ENCODE measurements at regions of chr16 and their contacts with region 1.

Region 1: DNA sequence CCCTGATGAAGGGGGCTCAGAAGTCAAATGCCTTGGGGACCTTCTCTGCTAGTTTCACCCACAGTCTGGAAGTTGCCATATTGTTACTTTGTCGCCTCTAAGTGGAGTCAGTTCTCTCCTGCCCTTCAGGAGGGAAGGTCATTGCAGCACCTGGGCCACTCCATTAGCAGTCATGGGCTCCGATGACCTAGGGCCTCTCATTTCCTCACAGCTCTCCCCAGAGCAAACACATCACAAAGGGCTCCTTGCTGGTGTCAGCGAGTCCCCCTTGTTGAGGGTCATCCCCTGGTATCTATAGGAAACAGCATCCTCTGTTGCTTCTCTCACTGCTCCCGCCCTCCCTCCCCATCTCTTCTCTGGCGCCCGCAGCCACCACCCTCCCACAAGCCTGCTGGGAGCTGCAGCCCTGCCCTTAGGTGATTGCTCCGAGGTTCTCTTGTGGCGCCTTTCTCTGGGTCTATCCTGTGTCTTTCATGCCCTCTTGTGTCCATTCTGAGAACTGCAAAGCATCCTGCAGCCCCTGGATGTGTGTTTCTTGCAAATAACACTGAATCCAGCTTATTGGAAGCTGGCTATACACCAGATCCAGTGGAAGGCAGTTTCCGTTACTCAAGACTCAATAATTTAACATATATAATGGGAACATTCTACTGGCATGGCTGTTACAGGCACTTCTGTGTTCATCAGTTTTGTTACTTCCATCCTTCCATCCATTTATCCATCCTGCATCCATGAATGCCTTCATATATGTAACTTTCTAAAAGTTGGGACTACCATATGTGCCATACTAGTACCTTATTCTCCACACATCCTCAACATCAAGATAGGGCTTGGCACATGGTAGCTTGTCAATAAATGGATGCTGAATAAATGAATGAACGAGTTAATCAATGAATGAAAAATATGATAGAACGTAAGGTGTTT is 21.2 kb downstream of the PDILT start:
- DNase-seq: peak; percentile 67 to 82
- H3K4me3 ChIP-seq: no peak overlapping the region
- H3K27ac ChIP-seq: no peak overlapping the region
- H3K4me1 ChIP-seq: peaks cover 0 to 5% (median 2%) of the 10 kb centered on the region in 4 experiments; a peak in 4 of 7 replicates
- H3K27me3 ChIP-seq: no peaks in the 10 kb centered on the region
- CTCF ChIP-seq: peak; percentile 50 to 94 (median 88)
- EP300 ChIP-seq: no peak
- POLR2A ChIP-seq: no peak
- RAD21 ChIP-seq: peak; percentile 92 to 97

Region 2: DNA sequence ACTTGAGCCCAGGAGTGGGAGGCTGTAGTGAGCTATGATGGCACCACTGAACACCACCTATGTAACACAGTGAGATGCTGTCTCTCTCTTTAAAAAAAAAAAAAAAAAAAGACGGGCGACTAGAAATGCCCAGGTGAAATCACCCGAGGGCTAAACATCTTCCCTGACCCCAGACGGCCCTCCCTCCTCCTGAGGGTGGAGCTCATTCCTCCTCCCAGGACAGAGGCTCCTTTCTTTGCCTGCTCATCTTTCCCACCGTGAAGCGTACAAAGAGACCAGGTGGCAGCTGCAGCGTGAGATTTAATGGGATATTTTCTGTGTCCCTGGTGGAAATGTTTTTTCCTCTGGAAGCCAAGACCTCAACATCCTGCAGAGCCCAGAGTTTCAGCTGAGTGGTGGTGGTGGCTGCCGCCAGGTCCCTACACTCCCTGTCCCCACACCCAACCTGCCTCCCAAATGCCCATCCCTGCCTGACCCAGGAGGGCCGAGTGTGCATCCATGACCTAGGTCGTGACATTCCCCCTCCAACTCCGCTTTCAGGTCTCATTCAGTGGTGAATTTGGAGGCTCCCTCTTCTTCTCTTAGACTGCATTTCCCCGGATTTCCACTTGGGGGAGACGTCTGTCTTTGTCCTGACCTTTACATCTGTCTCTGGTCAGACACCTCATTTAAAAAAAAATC is 484.3 kb before region 1 on chr16:
- CTCF ChIA-PET with region 1: interaction called, 57 read pairs
- POLR2A ChIA-PET with region 1: interaction called, 3 read pairs
- DNase-seq: peak in 1 of 2 experiments; percentile 86
- H3K4me3 ChIP-seq: no peak overlapping the region
- H3K27ac ChIP-seq: no peak overlapping the region; the same call in 1 of the 2 replicates
- H3K4me1 ChIP-seq: peaks cover 0 to 7% (median 4%) of the 10 kb centered on the region in 4 experiments; a peak in 5 of 7 replicates
- H3K27me3 ChIP-seq: no peaks in the 10 kb centered on the region
- CTCF ChIP-seq: peak; percentile 27 to 86 (median 73)
- EP300 ChIP-seq: no peak
- POLR2A ChIP-seq: no peak
- RAD21 ChIP-seq: peak; percentile 94 to 95

Region 3: GRCh38 chr16:20253825-20254224 is 129.5 kb before region 1 on chr16:
- CTCF ChIA-PET with region 1: no interaction called
- POLR2A ChIA-PET with region 1: no interaction called
- DNase-seq: no peak
- H3K4me3 ChIP-seq: no peak overlapping the region
- H3K27ac ChIP-seq: no peak overlapping the region
- H3K4me1 ChIP-seq: peaks cover 0 to 7% (median 1%) of the 10 kb centered on the region in 4 experiments; a peak in 2 of 7 replicates
- H3K27me3 ChIP-seq: no peaks in the 10 kb centered on the region
- CTCF ChIP-seq: no peak
- EP300 ChIP-seq: no peak
- POLR2A ChIP-seq: no peak
- RAD21 ChIP-seq: no peak

Region 4: DNA sequence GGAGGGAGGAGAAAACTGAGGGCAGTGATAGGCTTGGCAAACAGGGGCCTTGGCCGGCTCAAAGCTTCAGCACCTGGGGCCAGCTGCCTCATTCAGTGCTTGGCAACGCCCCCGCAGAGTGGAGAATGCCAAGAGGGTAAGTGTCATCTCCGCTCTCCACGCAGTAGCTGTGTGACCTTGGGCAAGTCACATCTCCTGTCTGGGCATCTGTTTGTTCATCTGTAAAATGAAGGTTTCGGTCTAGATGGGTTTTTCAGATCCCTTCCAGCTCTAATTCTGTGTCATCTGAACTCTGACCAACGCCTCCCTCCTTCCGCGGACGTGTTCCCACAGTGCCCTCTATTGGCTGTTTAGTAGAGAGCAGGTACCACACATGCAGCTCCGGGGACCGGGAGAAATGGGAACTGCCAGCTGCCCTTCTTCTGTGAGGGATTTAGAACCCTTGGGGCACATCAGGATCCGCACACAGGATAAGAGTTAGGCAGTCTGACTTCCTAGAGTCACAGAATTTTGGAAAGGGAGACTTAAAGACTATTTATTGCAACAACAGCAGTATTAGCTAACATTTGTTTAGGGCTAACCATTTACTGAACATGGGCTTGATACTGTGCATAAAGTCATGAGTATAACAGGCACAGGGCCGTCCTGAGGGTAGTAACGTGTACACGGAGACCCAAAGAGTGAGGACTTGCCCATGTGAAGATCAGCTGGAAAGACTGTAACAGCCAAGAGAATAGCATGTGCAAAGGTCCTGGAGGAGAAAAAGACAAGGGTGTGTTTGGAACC is 82.9 kb before region 1 on chr16:
- CTCF ChIA-PET with region 1: interaction called, 26 read pairs
- POLR2A ChIA-PET with region 1: no interaction called
- DNase-seq: peak; percentile 47 to 72
- H3K4me3 ChIP-seq: no peak overlapping the region
- H3K27ac ChIP-seq: no peak overlapping the region
- H3K4me1 ChIP-seq: no peaks in the 10 kb centered on the region; a peak in 1 of 7 replicates
- H3K27me3 ChIP-seq: no peaks in the 10 kb centered on the region
- CTCF ChIP-seq: peak; percentile 74 to 90 (median 88)
- EP300 ChIP-seq: no peak
- POLR2A ChIP-seq: no peak
- RAD21 ChIP-seq: peak; percentile 97 to 99

Region 5: GRCh38 chr16:20348365-20349185 is 34.8 kb before region 1 on chr16:
- CTCF ChIA-PET with region 1: interaction called, 36 read pairs
- POLR2A ChIA-PET with region 1: no interaction called
- DNase-seq: peak; percentile 39 to 93
- H3K4me3 ChIP-seq: no peak overlapping the region
- H3K27ac ChIP-seq: no peak overlapping the region
- H3K4me1 ChIP-seq: peaks cover 0 to 6% (median 1%) of the 10 kb centered on the region in 4 experiments; a peak in 3 of 7 replicates
- H3K27me3 ChIP-seq: no peaks in the 10 kb centered on the region
- CTCF ChIP-seq: peak; percentile 72 to 92 (median 83)
- EP300 ChIP-seq: no peak
- POLR2A ChIP-seq: no peak
- RAD21 ChIP-seq: peak; percentile 54 to 64

Region 6: DNA sequence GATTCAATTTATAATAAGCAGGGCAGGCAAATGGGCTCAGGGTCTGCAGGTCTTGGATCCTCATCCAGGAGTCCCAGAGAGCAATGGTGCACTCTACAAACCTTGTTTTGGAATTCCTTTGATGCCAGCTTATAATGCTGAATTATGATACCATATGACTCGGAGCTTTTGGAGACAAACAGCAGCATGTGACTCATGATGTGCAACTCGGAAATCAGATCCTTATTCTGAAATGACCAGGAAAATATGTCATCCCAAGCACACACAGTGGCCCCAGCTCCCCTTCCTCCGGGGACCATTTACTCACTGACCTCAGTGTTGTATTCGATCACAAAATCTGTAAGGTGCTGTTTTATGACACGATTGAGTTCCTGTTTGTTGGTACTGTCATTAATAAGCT is 10.7 kb before region 1 on chr16:
- CTCF ChIA-PET with region 1: interaction called, 20 read pairs
- POLR2A ChIA-PET with region 1: no interaction called
- DNase-seq: no peak
- H3K4me3 ChIP-seq: no peak overlapping the region
- H3K27ac ChIP-seq: no peak overlapping the region
- H3K4me1 ChIP-seq: no peaks in the 10 kb centered on the region
- H3K27me3 ChIP-seq: no peaks in the 10 kb centered on the region; a peak in 1 of 7 replicates
- CTCF ChIP-seq: no peak
- EP300 ChIP-seq: no peak
- POLR2A ChIP-seq: no peak
- RAD21 ChIP-seq: no peak

Region 7: DNA sequence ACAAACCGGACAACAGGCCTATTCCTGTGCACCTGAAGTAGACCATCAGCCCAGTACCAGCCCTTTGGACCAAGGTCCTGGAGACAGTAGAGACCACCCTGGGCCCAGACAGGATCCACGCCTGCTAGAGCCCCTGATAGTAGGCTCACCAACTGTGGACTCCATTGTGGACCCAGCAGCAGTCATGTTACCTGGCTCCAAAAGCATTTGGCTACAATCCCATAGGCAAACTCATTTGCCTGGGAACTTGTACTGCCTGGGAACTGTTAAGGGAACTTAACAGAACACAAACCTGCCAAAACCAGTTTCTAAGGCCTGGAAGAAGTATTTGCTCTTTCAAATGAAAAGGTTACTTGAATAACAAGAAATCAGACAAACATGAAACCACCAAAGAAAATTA is 324.1 kb after region 1 on chr16:
- CTCF ChIA-PET with region 1: interaction called, 13 read pairs
- POLR2A ChIA-PET with region 1: no interaction called
- DNase-seq: no peak
- H3K4me3 ChIP-seq: no peak overlapping the region
- H3K27ac ChIP-seq: no peak overlapping the region; the same call in 1 of the 2 replicates
- H3K4me1 ChIP-seq: no peaks in the 10 kb centered on the region
- H3K27me3 ChIP-seq: no peaks in the 10 kb centered on the region
- CTCF ChIP-seq: no peak
- EP300 ChIP-seq: no peak
- POLR2A ChIP-seq: no peak
- RAD21 ChIP-seq: no peak